ENCODE measurements at regions of chr11 and their contacts with region 1.

Region 1: DNA sequence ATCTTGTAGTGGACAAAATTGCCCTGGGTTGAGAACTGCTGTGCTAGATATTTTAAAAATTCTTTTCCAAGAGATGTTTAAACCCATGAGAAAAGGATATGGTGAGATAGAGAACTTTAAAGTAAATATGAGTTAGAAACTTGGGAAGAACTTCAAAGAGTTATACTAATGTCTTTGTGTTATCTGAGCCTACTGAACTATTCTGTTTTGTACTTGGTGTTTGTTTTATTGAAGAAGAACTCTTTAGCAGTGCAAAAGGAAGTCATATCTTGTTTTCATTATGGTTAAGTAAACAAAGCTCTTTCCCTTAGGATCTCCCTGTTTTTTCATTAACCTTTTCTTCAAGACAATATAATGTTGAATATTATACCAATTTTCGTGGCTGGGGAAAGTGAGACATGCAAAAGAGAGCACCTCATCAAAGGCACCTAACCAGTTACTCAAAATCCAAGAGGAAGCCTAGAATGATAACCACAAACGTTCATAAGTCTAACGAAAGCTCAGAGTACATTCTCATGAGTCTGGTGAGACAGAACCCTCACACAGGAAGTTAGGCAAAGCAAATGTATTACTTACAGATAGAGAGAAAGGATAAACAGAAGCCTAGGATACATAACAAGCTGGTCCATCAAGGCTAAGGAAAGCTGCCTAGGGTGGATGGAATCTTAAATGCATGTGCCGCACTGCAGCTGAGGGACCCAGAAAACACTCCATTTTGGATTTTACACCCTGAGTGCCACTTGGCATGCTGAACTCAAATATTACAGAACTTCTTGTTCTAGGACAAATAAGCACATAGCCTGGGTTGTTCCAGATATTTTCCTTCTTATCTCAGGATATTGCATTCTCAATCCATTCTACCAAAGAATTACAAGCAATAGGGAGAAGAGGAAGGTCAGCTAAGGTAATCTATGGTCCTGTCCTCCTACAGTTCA is 112.5 kb upstream of the ANO3 start:
- DNase-seq: no peak
- H3K4me3 ChIP-seq: no peak overlapping the region
- H3K4me3 Mint-ChIP-seq: no peak overlapping the region
- H3K27ac Mint-ChIP-seq: no peak overlapping the region
- H3K4me1 ChIP-seq: peaks cover 3% of the 10 kb centered on the region; the same call in 1 of the 2 replicates
- H3K4me1 Mint-ChIP-seq: no peaks in the 10 kb centered on the region
- H3K27me3 ChIP-seq: no peaks in the 10 kb centered on the region
- H3K27me3 Mint-ChIP-seq: no peaks in the 10 kb centered on the region
- CTCF ChIP-seq: no peak

Region 2: DNA sequence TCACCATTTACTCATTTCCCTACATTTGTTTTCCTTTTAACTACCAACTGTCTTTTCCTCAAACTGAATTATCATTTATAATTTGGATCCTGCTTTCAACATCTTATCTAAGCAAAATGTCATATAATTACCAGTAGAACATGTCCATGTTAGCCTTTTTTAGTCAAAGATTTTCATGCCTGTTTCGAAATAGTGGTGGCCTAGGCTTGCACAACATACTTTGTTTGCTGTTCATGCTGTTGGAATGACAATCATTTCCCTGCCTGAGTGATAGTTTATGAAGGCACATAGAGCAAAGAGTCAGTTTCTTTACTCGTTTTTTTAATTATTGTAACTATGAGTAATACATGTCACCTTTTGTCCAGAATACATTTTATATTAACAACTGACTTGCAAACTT is 31.8 kb before region 1 on chr11:
- CTCF ChIA-PET with region 1: no interaction called
- POLR2A ChIA-PET with region 1: no interaction called
- intact Hi-C with region 1: loop called (anchors 2 kb)
- DNase-seq: peak; percentile 47 to 66
- H3K4me3 ChIP-seq: no peak overlapping the region
- H3K4me3 Mint-ChIP-seq: no peak overlapping the region
- H3K27ac Mint-ChIP-seq: peak overlapping the region; percentile 74
- H3K4me1 ChIP-seq: peaks cover 20% of the 10 kb centered on the region
- H3K4me1 Mint-ChIP-seq: peaks cover 6% of the 10 kb centered on the region
- H3K27me3 ChIP-seq: no peaks in the 10 kb centered on the region
- H3K27me3 Mint-ChIP-seq: no peaks in the 10 kb centered on the region
- CTCF ChIP-seq: no peak

Region 3: DNA sequence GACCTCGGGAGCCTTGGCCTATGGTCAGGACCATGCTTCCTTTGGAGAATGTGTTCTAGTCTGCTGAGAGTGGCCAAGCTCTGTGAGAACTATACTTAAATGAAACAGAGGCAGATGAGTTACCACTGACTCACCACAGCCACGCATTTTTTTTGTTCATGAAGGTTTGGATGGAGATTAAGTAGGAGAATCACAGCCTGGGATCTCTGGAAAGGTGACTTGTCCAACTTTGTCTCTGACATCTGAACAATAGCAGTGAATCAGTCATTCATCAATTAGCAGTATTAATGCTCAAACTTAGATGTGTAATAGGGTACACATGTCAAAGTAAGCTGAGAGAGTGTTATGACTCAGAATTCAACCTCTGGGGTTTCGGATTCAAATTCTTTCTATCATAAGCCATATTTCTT is 11.8 kb after region 1 on chr11:
- CTCF ChIA-PET with region 1: no interaction called
- POLR2A ChIA-PET with region 1: no interaction called
- intact Hi-C with region 1: no loop called
- DNase-seq: no peak
- H3K4me3 ChIP-seq: no peak overlapping the region
- H3K4me3 Mint-ChIP-seq: no peak overlapping the region
- H3K27ac Mint-ChIP-seq: no peak overlapping the region
- H3K4me1 ChIP-seq: no peaks in the 10 kb centered on the region
- H3K4me1 Mint-ChIP-seq: no peaks in the 10 kb centered on the region
- H3K27me3 ChIP-seq: no peaks in the 10 kb centered on the region
- H3K27me3 Mint-ChIP-seq: peaks cover 4% of the 10 kb centered on the region
- CTCF ChIP-seq: no peak

Measured in Caco-2 (cell line).